ENCODE measurements at regions of chrX and their contacts with region 1.

Region 1: DNA sequence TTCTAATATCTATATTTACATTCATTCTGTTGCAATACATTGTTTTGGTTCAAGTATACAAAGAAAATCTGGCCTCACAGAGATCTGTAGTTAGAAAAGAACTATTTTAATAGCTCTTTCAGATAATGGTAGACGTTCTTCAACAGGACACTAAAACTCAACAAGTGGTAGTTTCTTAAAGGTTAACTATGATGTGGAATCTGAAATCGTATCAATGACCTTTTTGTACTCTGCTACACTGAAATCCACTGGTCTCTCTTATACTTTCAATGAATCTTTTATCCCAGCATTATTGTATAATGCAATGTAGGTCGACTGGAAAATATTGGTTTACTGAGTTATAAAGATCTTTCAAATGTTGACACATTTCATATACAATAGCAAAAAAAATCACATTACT is 12.7 kb downstream of the TMEM185A start:
- DNase-seq: no peak
- H3K4me3 ChIP-seq: no peak overlapping the region
- H3K27ac ChIP-seq: no peak overlapping the region
- H3K4me1 ChIP-seq: no peaks in the 10 kb centered on the region
- H3K27me3 ChIP-seq: no peaks in the 10 kb centered on the region
- CTCF ChIP-seq: no peak

Region 2: DNA sequence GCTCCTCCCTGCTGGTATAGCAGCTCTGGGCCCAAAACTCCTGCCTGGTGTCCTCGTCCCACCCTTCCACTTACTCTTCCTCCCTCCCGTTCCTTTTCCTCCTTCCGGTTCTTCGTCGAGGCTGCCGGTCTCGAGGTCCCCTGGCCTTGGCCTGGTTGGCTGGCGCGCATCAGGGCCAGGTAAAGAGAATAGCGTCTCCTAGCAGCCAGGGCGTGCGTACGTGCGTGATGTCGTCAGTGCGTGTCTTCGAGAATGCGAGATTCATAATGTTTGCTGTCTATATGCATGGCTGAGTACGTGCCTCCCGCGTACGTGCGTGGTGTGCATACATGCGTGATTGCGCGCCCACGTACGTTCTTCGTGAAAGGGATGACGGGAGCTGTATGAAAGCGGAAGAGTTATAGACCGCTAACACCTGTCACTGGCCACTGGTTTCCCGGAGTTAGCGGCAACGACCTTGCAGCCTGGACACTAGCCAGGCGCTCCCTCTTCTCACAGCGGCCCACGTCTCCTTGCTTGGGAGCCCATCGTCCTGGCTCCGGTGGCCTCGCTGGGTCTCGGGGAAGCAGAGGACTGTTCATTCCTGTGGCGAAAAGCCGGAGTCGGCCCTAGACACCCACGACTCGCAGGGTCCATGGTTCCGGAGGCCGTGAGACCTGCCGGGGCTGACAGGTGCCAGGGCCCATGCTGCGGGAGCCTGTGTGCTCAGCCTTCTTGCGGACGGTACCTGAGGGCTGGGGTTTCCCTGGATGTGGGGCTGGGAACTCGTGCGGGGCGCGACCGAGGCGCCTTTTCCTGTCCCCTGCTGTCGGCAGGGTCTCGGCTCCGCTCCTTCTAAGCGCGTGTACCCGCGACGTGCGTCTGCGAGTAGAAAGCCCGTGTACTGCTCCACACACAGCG is 78.0 kb before region 1 on chrX and contains the start of gene EOLA1:
- CTCF ChIA-PET with region 1: no interaction called
- POLR2A ChIA-PET with region 1: interaction called, 11 read pairs
- intact Hi-C with region 1: no loop called
- DNase-seq: peak; percentile 95
- H3K4me3 ChIP-seq: peak within 1 kb of the TSS; percentile 63
- H3K27ac ChIP-seq: peak within 1 kb of the TSS; percentile 91
- H3K4me1 ChIP-seq: no peaks in the 10 kb centered on the region
- H3K27me3 ChIP-seq: no peaks in the 10 kb centered on the region
- CTCF ChIP-seq: no peak
- total RNA-seq, gene EOLA1: 13.8 and 15.3 TPM in 2 replicates

Measured in A673 (cell line).